Heart right ventricle (tissue), 16 donors: ENCODE measurements at regions of chr4 and their contacts with region 1.

Region 1: GRCh38 chr4:128386761-128387599 is 99.4 kb upstream of the PGRMC2 start:
- DNase-seq: peak; percentile 84 to 87
- ATAC-seq: peak; percentile 94 to 97 (median 96)
- H3K4me3 ChIP-seq: peak overlapping the region in 2 of 10 donors; percentile 13 to 18
- H3K27ac ChIP-seq: peak overlapping the region; percentile 44 to 86 (median 79)
- H3K4me1 ChIP-seq: peaks cover 7 to 44% (median 23%) of the 10 kb centered on the region in 9 donors
- H3K27me3 ChIP-seq: no peaks in the 10 kb centered on the region
- CTCF ChIP-seq: no peak

Region 2: DNA sequence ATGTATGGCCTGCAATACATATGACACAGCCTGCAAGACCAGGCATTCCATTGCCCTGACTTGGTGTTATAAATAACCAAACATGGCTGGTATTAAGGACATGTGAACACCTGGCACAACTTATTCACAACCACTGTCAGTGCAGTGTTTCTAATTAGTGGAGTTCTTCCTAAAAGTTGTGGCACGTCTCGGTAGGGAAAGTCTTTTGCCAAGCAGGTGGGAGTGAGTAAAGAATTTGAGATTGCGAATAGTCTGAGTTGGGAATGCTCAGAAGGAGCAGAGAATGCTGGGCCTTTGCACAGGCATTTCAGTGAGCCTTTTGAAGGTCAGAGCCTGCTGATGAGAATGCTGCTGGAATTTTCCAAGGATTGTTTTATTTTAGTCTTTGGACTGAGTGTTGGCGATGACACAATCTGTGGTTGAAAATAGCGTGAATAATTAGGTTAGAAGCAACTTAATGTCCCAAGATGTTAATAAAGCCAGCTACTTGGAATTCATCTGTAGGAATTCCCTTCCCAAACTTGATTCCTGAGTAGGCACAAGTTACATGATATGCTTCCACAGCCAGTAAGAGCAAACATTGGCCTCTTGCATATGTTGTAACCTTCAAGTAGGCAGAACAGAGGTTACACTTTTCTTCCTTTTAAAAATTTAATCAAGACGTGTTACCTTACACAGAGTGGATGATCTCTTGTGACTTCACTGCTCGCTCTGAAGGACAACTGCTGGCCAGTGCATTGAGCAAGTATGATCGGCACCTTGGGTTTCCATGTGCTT is 15.8 kb before region 1 on chr4:
- intact Hi-C with region 1: loop called in 1 of 10 experiments (anchors 1 kb)
- DNase-seq: no peak
- ATAC-seq: peak; percentile 25 to 87 (median 72)
- H3K4me3 ChIP-seq: no peak overlapping the region
- H3K27ac ChIP-seq: peak overlapping the region in 9 of 10 donors; percentile 22 to 63 (median 42)
- H3K4me1 ChIP-seq: peaks cover 0 to 16% (median 7%) of the 10 kb centered on the region in 9 donors
- H3K27me3 ChIP-seq: no peaks in the 10 kb centered on the region
- CTCF ChIP-seq: no peak

Region 3: GRCh38 chr4:128427832-128428366 is 40.9 kb after region 1 on chr4:
- intact Hi-C with region 1: loop called in 1 of 10 experiments (anchors 5 kb)
- DNase-seq: peak in 1 of 2 donors; percentile 21
- ATAC-seq: peak; percentile 52 to 91 (median 85)
- H3K4me3 ChIP-seq: peak overlapping the region in 3 of 10 donors; percentile 5 to 45 (median 32)
- H3K27ac ChIP-seq: peak overlapping the region in 5 of 10 donors; percentile 20 to 65 (median 39)
- H3K4me1 ChIP-seq: peaks cover 0 to 21% (median 5%) of the 10 kb centered on the region in 9 donors
- H3K27me3 ChIP-seq: no peaks in the 10 kb centered on the region
- CTCF ChIP-seq: peak in 8 of 9 donors; percentile 6 to 59 (median 46)

Region 4: GRCh38 chr4:129240816-129241215 is 853.8 kb after region 1 on chr4:
- intact Hi-C with region 1: no loop called
- DNase-seq: no peak
- ATAC-seq: no peak
- H3K4me3 ChIP-seq: no peak overlapping the region
- H3K27ac ChIP-seq: no peak overlapping the region
- H3K4me1 ChIP-seq: peaks cover 0 to 7% (median 0%) of the 10 kb centered on the region in 9 donors
- H3K27me3 ChIP-seq: no peaks in the 10 kb centered on the region
- CTCF ChIP-seq: no peak